Endothelial cell of umbilical vein (primary cell): ENCODE measurements at regions of chr5 and their contacts with region 1.

Region 1: DNA sequence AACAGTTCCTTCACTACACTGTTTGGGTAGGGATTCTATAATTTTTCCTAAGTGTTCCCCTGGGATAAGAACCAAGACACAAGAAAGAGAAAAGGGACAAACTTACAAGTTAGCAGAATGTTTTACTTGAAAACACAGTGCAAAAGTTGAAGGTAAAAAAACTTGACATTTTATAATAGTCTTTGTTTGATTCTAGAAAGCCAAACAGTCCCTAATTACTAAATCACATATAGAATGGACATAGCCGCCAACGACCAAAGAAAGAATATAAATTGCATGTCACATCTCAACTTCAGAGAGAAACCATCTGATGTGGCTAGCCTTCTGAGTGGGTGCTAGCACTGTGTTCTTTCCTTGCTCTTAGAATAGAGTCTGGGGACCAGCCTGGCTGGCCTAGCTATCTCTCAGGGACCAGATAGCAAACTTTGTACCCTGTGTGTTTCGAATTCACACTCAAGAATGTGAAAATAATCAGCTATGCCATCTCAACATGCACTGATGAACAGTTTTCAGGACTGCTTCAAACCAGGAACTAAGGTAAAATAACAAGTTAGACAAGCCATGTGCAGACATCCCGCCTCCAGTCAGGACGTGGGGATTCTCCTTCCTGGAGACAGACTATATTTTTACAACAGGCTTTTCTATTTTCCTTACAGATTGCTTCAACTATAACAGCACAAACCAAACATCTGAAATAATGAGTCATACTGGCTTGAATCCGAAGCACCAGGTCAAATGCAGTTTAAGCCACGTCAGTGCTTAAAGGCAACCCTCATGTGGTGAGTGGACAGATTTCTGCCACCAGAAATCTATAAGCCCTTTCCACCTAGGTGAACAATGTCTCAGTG is 53.7 kb downstream of the LHFPL2 start:
- DNase-seq: peak; percentile 97
- H3K4me3 ChIP-seq: no peak overlapping the region
- H3K27ac ChIP-seq: peak overlapping the region; percentile 100
- H3K4me1 ChIP-seq: peaks cover 66% of the 10 kb centered on the region
- H3K27me3 ChIP-seq: no peaks in the 10 kb centered on the region
- CTCF ChIP-seq: no peak
- POLR2A ChIP-seq: no peak

Region 2: DNA sequence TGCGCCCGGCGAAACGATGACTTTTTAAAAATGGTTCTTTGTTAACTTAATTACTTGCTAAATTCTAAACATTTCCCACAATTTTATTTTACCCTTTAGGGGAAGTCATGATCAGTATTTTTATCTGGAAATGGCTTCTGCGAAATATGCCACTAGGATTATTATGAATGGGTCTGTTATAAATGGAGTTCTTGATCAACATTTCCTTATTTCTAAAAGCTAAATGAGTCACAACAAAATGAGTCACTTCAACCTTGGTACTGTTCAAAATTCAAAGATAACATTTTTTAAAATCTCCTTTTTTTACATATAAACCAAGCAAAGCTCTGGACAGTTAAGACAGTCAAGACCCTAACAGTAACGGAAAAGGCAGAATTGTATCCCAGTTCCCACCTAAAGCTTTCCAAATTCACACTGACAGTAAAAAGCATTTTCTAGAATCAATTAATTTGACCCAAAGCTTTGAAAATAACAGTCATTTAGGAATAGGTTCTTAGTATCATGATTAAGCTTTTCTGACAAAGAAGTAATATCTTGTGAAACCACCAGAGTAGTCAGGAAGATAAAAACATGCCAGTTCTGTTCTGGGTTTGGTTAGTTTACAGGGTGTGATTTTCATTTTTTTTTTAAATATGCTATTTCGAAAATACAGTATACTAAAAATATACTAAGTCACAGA is 27.9 kb before region 1 on chr5:
- CTCF ChIA-PET with region 1: interaction called, 7 read pairs
- POLR2A ChIA-PET with region 1: no interaction called
- dilution Hi-C with region 1: no loop called
- intact Hi-C with region 1: loop called (anchors 1 kb)
- DNase-seq: peak; percentile 74
- H3K4me3 ChIP-seq: no peak overlapping the region
- H3K27ac ChIP-seq: peak overlapping the region; percentile 71
- H3K4me1 ChIP-seq: peaks cover 39% of the 10 kb centered on the region
- H3K27me3 ChIP-seq: no peaks in the 10 kb centered on the region
- CTCF ChIP-seq: no peak
- POLR2A ChIP-seq: no peak

Region 3: DNA sequence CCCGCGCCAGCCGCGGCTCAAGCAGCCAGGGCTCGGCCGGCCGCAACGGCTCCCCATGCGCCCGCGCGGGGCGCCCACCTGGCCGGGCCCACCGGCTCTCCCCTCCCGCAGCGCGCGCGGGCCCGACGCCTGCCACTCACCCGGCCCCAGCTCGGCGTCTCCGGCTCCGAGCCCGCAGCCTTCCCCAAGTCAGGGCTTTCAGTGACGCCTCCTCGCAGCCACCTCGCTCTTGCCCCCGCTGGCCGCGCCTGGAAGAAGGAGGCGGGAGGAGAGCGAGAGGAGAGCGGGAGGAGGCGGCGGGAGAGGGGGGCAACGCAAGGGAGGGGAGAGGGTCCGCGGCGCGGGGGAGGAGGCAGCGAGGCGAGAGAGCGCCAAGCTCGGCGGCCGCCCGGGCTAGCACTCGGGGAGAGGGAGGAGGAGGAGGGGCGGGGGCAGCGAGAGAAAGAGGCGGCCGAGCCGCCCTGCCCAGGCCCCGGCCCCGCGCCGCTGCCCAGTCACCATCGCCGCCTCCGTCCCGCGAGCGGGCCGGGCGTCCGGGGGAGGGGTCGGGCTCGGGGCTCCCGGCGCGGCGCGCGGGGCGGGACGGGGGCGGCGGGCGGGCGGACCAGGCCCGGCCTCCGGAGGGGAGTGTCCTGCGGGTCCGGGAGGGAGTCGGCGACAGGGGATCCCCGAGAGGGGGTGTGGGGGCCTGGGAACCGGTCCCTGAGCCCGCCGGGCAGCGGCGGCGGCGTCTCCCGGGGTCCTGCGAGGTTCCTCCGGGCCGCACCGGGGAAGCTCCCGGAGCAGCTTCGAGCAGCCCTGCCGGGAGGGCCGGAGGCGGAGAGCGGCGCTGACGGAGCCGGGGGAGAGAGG is 53.8 kb after region 1 on chr5 and contains the start of gene LHFPL2:
- CTCF ChIA-PET with region 1: no interaction called
- POLR2A ChIA-PET with region 1: no interaction called
- dilution Hi-C with region 1: no loop called
- intact Hi-C with region 1: loop called (anchors 1 kb)
- DNase-seq: peak; percentile 77
- H3K4me3 ChIP-seq: peak within 1 kb of the TSS; percentile 38 to 78 (median 62)
- H3K27ac ChIP-seq: peak within 1 kb of the TSS; percentile 82
- H3K4me1 ChIP-seq: peaks cover 19% of the 10 kb centered on the region
- H3K27me3 ChIP-seq: no peaks in the 10 kb centered on the region
- CTCF ChIP-seq: no peak
- POLR2A ChIP-seq: no peak
- total RNA-seq, gene LHFPL2: 26.8 and 36.3 TPM in 2 replicates